ENCODE measurements at regions of chr11 and their contacts with region 1.

Region 1: DNA sequence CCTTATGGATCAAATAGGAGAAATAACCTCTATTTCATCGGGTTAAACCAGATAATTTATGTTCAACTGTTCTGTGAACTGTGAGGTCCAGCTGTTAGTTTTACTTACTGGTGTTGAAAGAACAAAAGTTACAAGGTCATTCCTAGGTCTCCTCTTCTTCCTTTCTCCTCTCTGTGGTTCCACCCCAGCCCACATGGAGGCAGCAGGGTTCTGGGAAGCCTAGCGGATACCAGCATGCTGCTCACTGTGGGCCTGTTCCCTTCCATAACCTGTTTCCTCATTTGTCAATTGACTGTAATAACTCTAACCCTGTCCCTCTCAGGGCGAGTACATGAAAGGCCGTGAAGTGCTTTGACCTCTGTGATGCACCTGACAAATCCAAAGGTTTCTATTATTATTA is 27.8 kb downstream of the RELT start:
- DNase-seq: peak; percentile 74 to 83 (median 81)
- H3K4me3 ChIP-seq: no peak overlapping the region
- H3K4me3 Mint-ChIP-seq: no peak overlapping the region
- H3K27ac ChIP-seq: peak overlapping the region in 1 of 2 donors; percentile 57
- H3K27ac Mint-ChIP-seq: peak overlapping the region in 5 of 7 donors; percentile 22 to 83 (median 67)
- H3K4me1 ChIP-seq: peaks cover 29 to 45% of the 10 kb centered on the region in 2 donors
- H3K4me1 Mint-ChIP-seq: peaks cover 46% of the 10 kb centered on the region
- H3K27me3 ChIP-seq: no peaks in the 10 kb centered on the region
- H3K27me3 Mint-ChIP-seq: peaks cover 0 to 1% (median 0%) of the 10 kb centered on the region in 3 donors
- CTCF ChIP-seq: peak; percentile 83

Region 2: DNA sequence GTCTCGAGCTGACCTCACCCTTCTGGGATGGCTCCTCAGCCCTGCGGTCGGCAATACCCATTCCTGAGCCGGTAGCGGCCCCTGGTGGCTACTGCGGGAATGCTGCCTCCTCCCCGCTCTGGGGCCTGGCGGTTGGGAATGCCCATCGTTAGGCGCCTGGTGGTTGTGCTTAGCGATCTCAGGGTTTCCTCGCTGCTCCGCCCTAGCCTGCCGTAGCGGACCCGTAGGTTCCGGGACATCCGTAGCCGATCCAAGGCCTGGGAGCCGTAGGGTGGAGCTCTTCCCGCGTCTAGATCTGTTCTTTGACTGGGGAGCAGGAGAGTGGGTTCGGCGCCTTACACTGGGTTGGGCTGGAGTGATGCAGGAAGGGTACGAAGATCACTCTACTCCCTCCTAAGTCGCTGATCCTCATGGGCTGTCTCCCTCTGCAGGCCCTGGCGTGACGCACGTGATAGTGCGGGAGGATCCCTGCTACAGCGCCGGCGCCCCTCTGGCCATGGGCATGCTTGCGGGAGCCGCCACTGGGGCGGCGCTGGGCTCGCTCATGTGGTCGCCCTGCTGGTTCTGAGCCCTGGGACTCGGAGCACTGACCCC is 257.1 kb after region 1 on chr11:
- intact Hi-C with region 1: loop called (anchors 1 to 2 kb)
- DNase-seq: peak; percentile 73 to 82 (median 81)
- H3K4me3 ChIP-seq: peak overlapping the region in 2 of 3 experiments; percentile 19 to 65
- H3K4me3 Mint-ChIP-seq: peak overlapping the region; percentile 64 to 85
- H3K27ac ChIP-seq: no peak overlapping the region
- H3K27ac Mint-ChIP-seq: no peak overlapping the region
- H3K4me1 ChIP-seq: peaks cover 23 to 28% of the 10 kb centered on the region in 2 donors
- H3K4me1 Mint-ChIP-seq: peaks cover 31% of the 10 kb centered on the region
- H3K27me3 ChIP-seq: peaks cover 0 to 12% of the 10 kb centered on the region in 2 donors
- H3K27me3 Mint-ChIP-seq: peaks cover 17 to 24% (median 18%) of the 10 kb centered on the region in 3 donors
- CTCF ChIP-seq: peak; percentile 98

Measured in CD14-positive monocyte (primary cell).